ENCODE measurements at regions of chr17 and their contacts with region 1.

Region 1: DNA sequence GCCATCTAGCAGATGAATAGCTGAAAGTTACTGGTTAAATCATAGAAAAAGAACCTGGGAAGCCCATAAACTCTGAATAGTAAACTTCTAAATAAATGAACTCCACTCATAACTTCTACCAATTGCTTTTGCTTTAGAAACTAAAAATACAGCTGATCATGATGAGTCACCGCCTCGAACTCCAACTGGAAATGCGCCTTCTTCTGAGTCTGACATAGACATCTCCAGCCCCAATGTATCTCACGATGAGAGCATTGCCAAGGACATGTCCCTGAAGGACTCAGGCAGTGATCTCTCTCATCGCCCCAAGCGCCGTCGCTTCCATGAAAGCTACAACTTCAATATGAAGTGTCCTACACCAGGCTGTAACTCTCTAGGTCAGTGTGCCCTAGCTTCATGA is 9.7 kb downstream of the KAT7 start:
- DNase-seq: no peak
- H3K4me3 ChIP-seq: no peak overlapping the region
- H3K27ac ChIP-seq: no peak overlapping the region
- H3K4me1 ChIP-seq: peaks cover 0 to 52% (median 26%) of the 10 kb centered on the region in 4 donors
- H3K27me3 ChIP-seq: no peaks in the 10 kb centered on the region
- CTCF ChIP-seq: no peak
- EP300 ChIP-seq: no peak
- POLR2A ChIP-seq: no peak

Region 2: DNA sequence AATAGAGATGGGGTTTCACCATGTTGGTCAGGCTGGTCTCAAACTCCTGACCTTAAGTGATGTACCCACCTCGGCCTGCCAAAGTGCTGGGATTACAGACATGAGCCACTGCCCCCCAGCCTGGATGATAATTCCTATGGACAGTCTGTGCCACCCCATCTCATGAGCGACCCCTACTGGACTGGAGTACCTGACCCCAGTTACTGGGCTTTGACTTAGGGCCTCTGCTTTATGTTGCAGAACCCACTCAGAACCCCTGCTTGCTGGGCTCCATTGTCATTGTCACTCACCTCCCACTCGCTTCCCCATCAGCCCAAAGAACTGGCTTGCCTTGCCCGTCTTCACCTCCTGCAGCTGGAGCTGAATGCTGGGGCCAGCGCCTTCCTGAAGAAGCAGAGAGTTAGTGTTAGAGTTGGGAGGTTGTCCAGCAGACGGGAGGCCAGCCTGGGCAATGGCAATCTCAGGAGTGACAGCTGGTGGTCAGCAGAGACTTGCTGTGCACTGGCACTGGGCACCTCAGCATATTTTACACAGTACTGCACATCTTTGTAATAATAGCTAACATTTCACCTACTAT is 45.7 kb after region 1 on chr17:
- intact Hi-C with region 1: loop called (anchors 10 kb)
- DNase-seq: no peak
- H3K4me3 ChIP-seq: no peak overlapping the region
- H3K27ac ChIP-seq: no peak overlapping the region
- H3K4me1 ChIP-seq: peaks cover 0 to 37% (median 16%) of the 10 kb centered on the region in 4 donors
- H3K27me3 ChIP-seq: no peaks in the 10 kb centered on the region
- CTCF ChIP-seq: peak in 3 of 7 experiments; percentile 23 to 28 (median 28)
- EP300 ChIP-seq: no peak
- POLR2A ChIP-seq: no peak

Measured in stomach (tissue), 19 donors.